ENCODE measurements at regions of chr15 and their contacts with region 1.

Region 1: GRCh38 chr15:43903864-43904290 is 77.1 kb downstream of the WDR76 start:
- DNase-seq: peak; percentile 51 to 54
- H3K4me3 ChIP-seq: no peak overlapping the region
- H3K27ac ChIP-seq: no peak overlapping the region
- H3K4me1 ChIP-seq: no peaks in the 10 kb centered on the region
- H3K27me3 ChIP-seq: no peaks in the 10 kb centered on the region
- CTCF ChIP-seq: peak; percentile 91

Region 2: GRCh38 chr15:43966646-43967045 is 62.8 kb after region 1 on chr15:
- CTCF ChIA-PET with region 1: no interaction called
- POLR2A ChIA-PET with region 1: no interaction called
- intact Hi-C with region 1: no loop called
- DNase-seq: no peak
- H3K4me3 ChIP-seq: no peak overlapping the region
- H3K27ac ChIP-seq: no peak overlapping the region
- H3K4me1 ChIP-seq: no peaks in the 10 kb centered on the region
- H3K27me3 ChIP-seq: no peaks in the 10 kb centered on the region
- CTCF ChIP-seq: no peak

Region 3: DNA sequence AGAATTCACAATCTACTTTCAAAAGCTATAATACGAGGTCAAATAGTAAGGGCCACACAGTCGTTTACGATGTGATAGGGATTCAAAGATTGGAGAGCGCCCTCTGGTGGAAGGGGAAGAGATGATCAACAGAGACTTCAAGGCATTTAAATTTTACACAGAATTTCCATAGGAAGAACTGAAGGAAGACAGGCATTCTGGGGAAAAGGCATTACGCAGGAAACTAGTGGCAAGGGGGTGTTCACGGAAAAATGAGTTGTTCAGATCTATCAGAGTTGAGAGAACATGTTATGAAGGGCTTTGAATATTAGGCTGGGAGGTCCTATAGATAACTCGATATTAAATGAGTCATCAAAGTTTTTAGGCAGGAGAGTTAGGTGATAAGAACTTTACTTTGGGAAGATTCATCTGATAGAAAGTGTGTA is 162.5 kb after region 1 on chr15:
- CTCF ChIA-PET with region 1: interaction called, 13 read pairs
- POLR2A ChIA-PET with region 1: no interaction called
- intact Hi-C with region 1: loop called (anchors 1 kb)
- DNase-seq: peak; percentile 51 to 52
- H3K4me3 ChIP-seq: no peak overlapping the region
- H3K27ac ChIP-seq: no peak overlapping the region
- H3K4me1 ChIP-seq: no peaks in the 10 kb centered on the region
- H3K27me3 ChIP-seq: no peaks in the 10 kb centered on the region
- CTCF ChIP-seq: peak; percentile 90

Region 4: GRCh38 chr15:44129911-44130310 is 226.0 kb after region 1 on chr15:
- CTCF ChIA-PET with region 1: no interaction called
- POLR2A ChIA-PET with region 1: no interaction called
- intact Hi-C with region 1: loop called (anchors 5 kb)
- DNase-seq: no peak
- H3K4me3 ChIP-seq: no peak overlapping the region
- H3K27ac ChIP-seq: no peak overlapping the region
- H3K4me1 ChIP-seq: no peaks in the 10 kb centered on the region
- H3K27me3 ChIP-seq: no peaks in the 10 kb centered on the region
- CTCF ChIP-seq: no peak

Region 5: GRCh38 chr15:44215594-44215993 is 311.7 kb after region 1 on chr15:
- CTCF ChIA-PET with region 1: no interaction called
- POLR2A ChIA-PET with region 1: no interaction called
- intact Hi-C with region 1: loop called (anchors 1 kb)
- DNase-seq: peak; percentile 26 to 71
- H3K4me3 ChIP-seq: no peak overlapping the region
- H3K27ac ChIP-seq: no peak overlapping the region
- H3K4me1 ChIP-seq: 0 out of 2 replicates have a peak, but pooled peaks cover 4% of the 10 kb centered on the region
- H3K27me3 ChIP-seq: no peaks in the 10 kb centered on the region
- CTCF ChIP-seq: no peak

Region 6: DNA sequence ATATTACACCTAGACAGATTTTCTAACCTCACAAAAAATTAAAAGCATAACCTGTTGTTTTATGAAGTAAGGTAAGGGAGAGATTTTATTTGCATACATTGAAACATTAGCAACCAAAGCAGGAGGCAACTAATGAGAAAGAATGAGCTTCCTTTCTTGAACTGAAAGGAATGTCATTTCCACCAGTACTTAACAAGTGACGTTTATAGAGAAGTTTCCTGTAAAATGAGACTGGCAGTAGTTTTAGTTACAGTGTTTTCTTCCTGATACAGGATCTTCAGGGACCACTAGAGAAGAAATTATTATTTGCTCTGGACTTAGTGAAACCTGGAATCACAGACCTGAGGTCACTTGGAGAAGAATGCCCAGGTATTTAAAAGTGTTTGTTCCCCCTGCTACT is 318.6 kb after region 1 on chr15:
- CTCF ChIA-PET with region 1: interaction called, 15 read pairs
- POLR2A ChIA-PET with region 1: no interaction called
- intact Hi-C with region 1: loop called (anchors 1 kb)
- DNase-seq: no peak
- H3K4me3 ChIP-seq: no peak overlapping the region
- H3K27ac ChIP-seq: no peak overlapping the region
- H3K4me1 ChIP-seq: no peaks in the 10 kb centered on the region
- H3K27me3 ChIP-seq: no peaks in the 10 kb centered on the region
- CTCF ChIP-seq: no peak

Region 7: DNA sequence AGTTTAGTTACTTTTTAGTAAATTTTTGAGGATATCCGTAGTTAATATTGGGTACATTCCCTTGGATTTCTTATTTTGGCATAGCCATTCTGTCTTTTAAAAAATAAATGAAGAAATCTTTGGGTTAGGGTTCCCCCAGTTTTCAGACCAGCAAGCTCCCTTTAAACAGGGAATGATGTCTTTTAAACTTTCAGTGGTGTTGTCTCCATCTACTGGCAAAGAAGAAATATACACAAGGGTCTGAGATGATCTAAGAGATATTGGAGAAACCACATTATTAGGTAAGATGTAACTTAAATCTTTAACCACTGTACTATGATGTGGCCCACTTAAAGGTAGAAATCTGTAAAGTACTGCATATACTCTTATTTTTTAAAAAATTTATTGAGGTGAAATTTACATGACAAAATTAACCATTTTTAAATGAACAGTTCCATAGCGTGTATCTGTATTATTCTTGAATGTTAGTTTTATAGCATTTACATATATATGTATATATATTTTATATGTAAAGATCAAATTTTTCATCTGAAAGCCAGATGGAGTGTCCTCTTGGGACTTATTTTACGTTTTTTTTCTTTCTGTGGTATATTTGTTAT is 598.0 kb after region 1 on chr15:
- CTCF ChIA-PET with region 1: no interaction called
- POLR2A ChIA-PET with region 1: no interaction called
- intact Hi-C with region 1: loop called (anchors 1 kb)
- DNase-seq: no peak
- H3K4me3 ChIP-seq: no peak overlapping the region
- H3K27ac ChIP-seq: no peak overlapping the region
- H3K4me1 ChIP-seq: no peaks in the 10 kb centered on the region
- H3K27me3 ChIP-seq: no peaks in the 10 kb centered on the region
- CTCF ChIP-seq: peak; percentile 70